Activated T-helper 1 cell treated with anti-CD3 and anti-CD28 coated beads, Interleukin-12 subunit alpha, Interleukin-12 subunit beta, Interleukin-2, Interleukin-4 antibody, amounts not matched to agents 30 ng/mL and 10 ng/mL and 1 ng/mL, durations not matched to agents 14 hours and 24 hours and 36 hours (primary cell): ENCODE measurements at regions of chr6 and their contacts with region 1.

Region 1: GRCh38 chr6:136593748-136594490 is 43.7 kb upstream of the MAP7 start:
- DNase-seq: peak; percentile 56
- H3K4me3 Mint-ChIP-seq: peak overlapping the region; percentile 75
- H3K27ac Mint-ChIP-seq: peak overlapping the region; percentile 96
- H3K4me1 Mint-ChIP-seq: peaks cover 54% of the 10 kb centered on the region
- H3K27me3 Mint-ChIP-seq: no peaks in the 10 kb centered on the region

Region 2: GRCh38 chr6:136510782-136511181 is 83.1 kb before region 1 on chr6:
- intact Hi-C with region 1: loop called (anchors 2 kb)
- DNase-seq: no peak
- H3K4me3 Mint-ChIP-seq: no peak overlapping the region
- H3K27ac Mint-ChIP-seq: peak overlapping the region; percentile 59
- H3K4me1 Mint-ChIP-seq: peaks cover 23% of the 10 kb centered on the region
- H3K27me3 Mint-ChIP-seq: no peaks in the 10 kb centered on the region